Activated CD4-positive, alpha-beta T cell treated with anti-CD3 and anti-CD28 coated beads, Interleukin-2, amount 10 ng/mL, durations not matched to agents 24 days and 14 days (primary cell): ENCODE measurements at regions of chr16 and their contacts with region 1.

Region 1: DNA sequence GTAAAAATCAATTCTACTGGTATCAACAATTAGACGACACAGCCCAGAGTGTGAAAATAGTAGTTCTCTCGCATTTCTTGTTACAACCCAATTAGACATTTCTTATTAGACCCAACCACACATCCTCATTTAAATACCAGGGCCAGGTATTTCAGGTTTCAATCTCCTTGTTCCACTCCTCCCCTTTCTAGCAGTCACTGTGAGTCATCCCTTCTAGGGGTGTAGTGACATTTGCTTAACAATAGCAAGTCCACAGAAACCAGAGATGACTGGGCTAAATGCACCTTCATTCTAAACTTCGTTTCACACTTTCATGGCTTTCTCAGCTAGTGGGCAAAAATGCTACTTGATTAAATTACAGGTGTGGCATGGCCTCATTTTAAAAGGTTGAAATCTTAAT is 116.9 kb upstream of the CACNG3 start:
- DNase-seq: no peak
- H3K4me3 Mint-ChIP-seq: no peak overlapping the region
- H3K27ac Mint-ChIP-seq: no peak overlapping the region
- H3K4me1 Mint-ChIP-seq: peaks cover 18% of the 10 kb centered on the region
- H3K27me3 Mint-ChIP-seq: no peaks in the 10 kb centered on the region

Region 2: GRCh38 chr16:24015923-24016322 is 123.4 kb before region 1 on chr16:
- intact Hi-C with region 1: no loop called
- DNase-seq: no peak
- H3K4me3 Mint-ChIP-seq: no peak overlapping the region
- H3K27ac Mint-ChIP-seq: no peak overlapping the region
- H3K4me1 Mint-ChIP-seq: peaks cover 43% of the 10 kb centered on the region
- H3K27me3 Mint-ChIP-seq: no peaks in the 10 kb centered on the region

Region 3: GRCh38 chr16:24151482-24151939 is 12.2 kb after region 1 on chr16:
- intact Hi-C with region 1: loop called (anchors 1 kb)
- DNase-seq: peak; percentile 67
- H3K4me3 Mint-ChIP-seq: no peak overlapping the region
- H3K27ac Mint-ChIP-seq: peak overlapping the region; percentile 84
- H3K4me1 Mint-ChIP-seq: peaks cover 26% of the 10 kb centered on the region
- H3K27me3 Mint-ChIP-seq: no peaks in the 10 kb centered on the region

Region 4: DNA sequence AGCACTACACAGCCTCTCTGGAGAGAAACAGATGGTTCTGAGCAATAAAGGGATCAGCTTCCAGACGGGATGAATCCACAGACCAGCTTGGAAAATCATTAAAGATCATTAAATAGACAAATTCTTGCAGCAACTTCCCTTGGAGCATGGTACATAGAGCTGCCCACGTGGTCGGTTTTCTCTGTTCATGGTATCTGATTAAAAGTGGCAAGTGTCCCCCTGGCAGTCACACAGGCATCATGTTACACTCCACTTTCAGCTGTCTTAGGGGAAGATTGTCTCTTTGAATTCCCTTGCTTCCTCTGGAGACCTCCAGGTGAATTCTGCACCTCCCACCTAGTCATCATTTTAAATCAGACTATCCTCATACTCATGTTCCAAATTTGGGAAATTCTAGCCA is 24.7 kb after region 1 on chr16:
- intact Hi-C with region 1: no loop called
- DNase-seq: no peak
- H3K4me3 Mint-ChIP-seq: no peak overlapping the region
- H3K27ac Mint-ChIP-seq: no peak overlapping the region
- H3K4me1 Mint-ChIP-seq: no peaks in the 10 kb centered on the region
- H3K27me3 Mint-ChIP-seq: no peaks in the 10 kb centered on the region

Region 5: GRCh38 chr16:24189941-24190340 is 50.7 kb after region 1 on chr16:
- intact Hi-C with region 1: loop called (anchors 5 kb)
- DNase-seq: no peak
- H3K4me3 Mint-ChIP-seq: peak overlapping the region; percentile 5
- H3K27ac Mint-ChIP-seq: peak overlapping the region; percentile 71
- H3K4me1 Mint-ChIP-seq: peaks cover 14% of the 10 kb centered on the region
- H3K27me3 Mint-ChIP-seq: no peaks in the 10 kb centered on the region